Uterus (tissue), 4 donors: ENCODE measurements at regions of chr4 and their contacts with region 1.

Region 1: DNA sequence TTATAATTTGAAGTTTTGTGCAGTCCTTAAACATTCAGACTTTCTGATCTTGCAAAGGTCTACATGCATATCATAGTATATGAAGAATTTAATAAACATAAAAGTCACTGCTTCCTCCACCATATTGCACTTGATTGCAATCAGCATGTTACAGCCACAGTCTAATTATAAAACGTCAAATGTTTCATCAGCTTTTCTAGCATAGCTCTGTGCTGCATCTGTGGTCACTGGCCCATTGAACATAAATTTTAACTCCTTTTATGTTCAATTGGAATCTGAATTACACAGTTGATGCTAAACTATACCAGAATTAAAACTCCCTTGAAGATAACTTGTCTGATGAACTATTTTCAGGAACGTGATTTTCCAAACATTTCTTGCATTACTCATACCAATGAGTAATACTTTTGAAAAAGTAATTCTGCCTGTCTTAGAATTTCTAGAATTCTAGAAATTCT is 329.1 kb downstream of the GALNTL6 start:
- DNase-seq: no peak
- H3K4me3 ChIP-seq: no peak overlapping the region
- H3K27ac ChIP-seq: no peak overlapping the region
- H3K4me1 ChIP-seq: no peaks in the 10 kb centered on the region
- H3K27me3 ChIP-seq: peaks cover 0 to 5% of the 10 kb centered on the region in 2 donors
- CTCF ChIP-seq: no peak
- POLR2A ChIP-seq: no peak

Region 2: DNA sequence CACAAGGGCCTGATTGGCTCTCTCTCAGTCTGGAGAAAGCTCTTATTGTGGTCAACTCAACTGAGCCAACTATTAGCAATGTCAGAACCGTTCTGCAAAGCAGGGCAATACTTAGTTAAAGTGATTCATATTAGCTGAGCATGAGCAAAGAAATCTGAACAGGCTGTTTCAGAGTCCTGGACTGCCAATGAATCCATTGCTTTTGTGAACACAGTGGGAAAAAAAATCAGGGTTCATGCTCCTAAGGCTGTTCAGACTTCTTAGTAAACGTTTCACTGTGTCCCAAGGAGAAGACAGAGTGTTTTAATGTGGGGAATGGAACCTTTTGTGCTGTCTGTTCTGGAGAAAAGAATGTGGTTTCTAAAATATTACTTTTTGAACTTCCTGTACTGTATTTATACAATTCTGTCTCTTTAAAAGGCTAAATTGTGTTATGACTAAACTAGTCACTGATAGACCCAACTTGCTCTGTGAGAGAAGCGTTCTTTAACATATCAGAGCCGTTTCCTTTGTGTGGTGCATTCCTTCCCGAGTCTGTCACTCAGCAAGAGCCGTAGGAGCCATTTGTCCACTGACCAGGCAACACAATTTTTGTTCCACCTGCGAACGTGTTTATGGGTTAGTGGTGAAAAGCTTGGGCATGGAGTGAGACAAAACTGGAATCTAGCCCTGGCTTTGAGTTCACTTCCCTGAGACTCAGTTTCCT is 1775.1 kb after region 1 on chr4:
- intact Hi-C with region 1: loop called (anchors 10 kb)
- DNase-seq: no peak
- H3K4me3 ChIP-seq: no peak overlapping the region
- H3K27ac ChIP-seq: peak overlapping the region in 1 of 2 donors; percentile 56
- H3K4me1 ChIP-seq: no peaks in the 10 kb centered on the region
- H3K27me3 ChIP-seq: no peaks in the 10 kb centered on the region
- CTCF ChIP-seq: no peak
- POLR2A ChIP-seq: no peak